ENCODE measurements at regions of chr18 and their contacts with region 1.

Region 1: GRCh38 chr18:42614619-42615293 is 500.7 kb downstream of the RIT2 start:
- DNase-seq: peak in 4 of 5 donors; percentile 35 to 63 (median 38)
- ATAC-seq: peak; percentile 97 to 99 (median 98)
- H3K4me3 ChIP-seq: no peak overlapping the region
- H3K27ac ChIP-seq: peak overlapping the region in 10 of 12 donors; percentile 20 to 75 (median 52)
- H3K4me1 ChIP-seq: peaks cover 0 to 20% (median 9%) of the 10 kb centered on the region in 12 donors
- H3K27me3 ChIP-seq: no peaks in the 10 kb centered on the region
- CTCF ChIP-seq: no peak
- POLR2A ChIP-seq: no peak

Region 2: GRCh38 chr18:43248610-43249249 is 634.0 kb after region 1 on chr18:
- intact Hi-C with region 1: loop called in 1 of 10 experiments (anchors 10 kb)
- DNase-seq: no peak
- ATAC-seq: no peak
- H3K4me3 ChIP-seq: no peak overlapping the region
- H3K27ac ChIP-seq: no peak overlapping the region
- H3K4me1 ChIP-seq: no peaks in the 10 kb centered on the region
- H3K27me3 ChIP-seq: no peaks in the 10 kb centered on the region
- CTCF ChIP-seq: no peak
- POLR2A ChIP-seq: no peak

Measured in heart left ventricle (tissue), 16 donors.